Astrocyte of the cerebellum (primary cell): ENCODE measurements at regions of chr17 and their contacts with region 1.

Region 1: DNA sequence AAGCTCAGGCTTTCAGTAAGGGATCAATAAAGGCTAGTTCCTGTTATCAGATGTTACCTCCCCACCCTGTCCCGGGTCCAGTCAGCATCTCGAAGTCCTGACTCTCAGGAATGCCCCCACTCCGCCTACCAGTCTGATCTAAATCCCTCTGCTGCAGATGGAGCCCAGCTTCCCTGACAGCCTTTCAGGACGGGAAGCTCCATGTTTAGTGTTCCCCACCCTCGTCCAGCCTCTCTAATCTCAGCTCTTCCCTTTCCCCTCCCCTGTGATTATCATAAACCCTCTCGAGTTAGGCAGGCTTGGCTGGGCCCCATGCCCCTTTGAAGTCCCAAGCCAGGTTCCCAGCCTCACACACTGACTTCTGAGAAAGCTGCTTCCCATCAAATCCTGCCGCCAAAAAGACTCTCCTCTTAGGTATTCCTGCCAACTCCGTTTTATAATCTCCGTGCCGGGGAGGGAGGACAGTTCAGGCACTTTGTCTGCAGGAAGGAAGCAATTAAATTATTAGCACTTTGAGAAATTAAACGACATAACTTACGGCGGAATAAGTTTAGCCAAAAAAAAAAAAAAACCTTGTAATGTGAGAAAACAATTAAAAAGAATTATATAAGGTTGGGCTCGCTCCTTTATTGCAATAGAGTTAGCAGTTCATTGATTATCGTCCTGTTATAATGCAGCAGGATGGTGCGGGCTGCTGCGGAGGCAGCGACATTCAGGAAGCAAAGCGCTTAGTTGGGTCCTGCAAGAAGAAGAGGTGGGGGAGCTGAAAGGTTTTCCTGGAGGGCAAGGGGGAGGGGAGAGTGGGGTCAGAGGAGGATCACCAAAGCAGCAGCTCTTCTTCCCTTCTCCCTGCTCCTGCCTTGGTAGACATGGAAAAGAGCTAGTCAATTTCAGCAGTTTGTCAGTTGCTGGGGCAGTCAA is 16.8 kb upstream of the ETV4 start:
- DNase-seq: no peak
- H3K4me3 ChIP-seq: no peak overlapping the region
- CTCF ChIP-seq: no peak

Region 2: GRCh38 chr17:43615330-43616028 is 52.5 kb after region 1 on chr17:
- in situ Hi-C with region 1: no loop called
- DNase-seq: no peak
- H3K4me3 ChIP-seq: no peak overlapping the region
- CTCF ChIP-seq: no peak

Region 3: DNA sequence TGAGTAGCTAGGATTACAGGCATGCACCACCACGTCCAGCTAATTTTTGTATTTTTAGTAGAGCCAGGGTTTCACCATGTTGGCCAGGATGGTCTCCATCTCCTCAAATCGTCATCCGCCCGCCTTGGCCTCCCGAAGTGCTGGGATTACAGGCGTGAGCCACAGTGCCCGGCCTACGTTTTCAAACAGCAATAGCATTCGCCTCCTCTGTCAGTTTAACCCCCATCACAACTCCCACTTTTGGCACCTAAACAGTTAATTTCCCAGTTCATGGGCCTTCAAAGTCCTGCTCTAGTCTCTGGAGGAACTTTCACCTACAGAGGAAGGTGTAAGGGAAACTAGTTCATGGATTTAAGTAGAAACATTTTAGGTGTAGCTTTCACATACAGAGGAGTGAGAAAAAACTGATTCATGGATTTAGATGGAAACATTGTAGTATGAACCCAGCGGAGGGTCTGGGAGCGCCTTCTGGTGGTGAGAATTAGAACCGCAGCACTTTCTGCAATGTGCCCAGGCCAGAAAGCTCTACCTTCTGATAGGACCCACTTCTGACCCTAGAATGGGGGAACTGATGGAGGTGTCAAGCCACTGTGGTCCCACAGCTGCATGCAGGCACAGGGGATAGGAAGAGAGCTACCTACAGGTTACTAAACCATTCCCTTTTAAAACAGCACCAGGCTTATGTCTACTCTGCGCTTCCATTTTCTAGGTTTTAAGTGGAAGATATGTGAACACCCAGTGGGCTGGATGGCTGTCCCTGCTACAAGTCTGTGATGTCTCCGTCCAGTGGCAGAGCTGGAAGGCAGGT is 110.8 kb after region 1 on chr17:
- in situ Hi-C with region 1: loop called (anchors 5 kb)
- DNase-seq: peak; percentile 42
- H3K4me3 ChIP-seq: no peak overlapping the region
- CTCF ChIP-seq: peak; percentile 94